Caco-2 (cell line): ENCODE measurements at regions of chr14 and their contacts with region 1.

Region 1: GRCh38 chr14:101039755-101040138 is 136.2 kb upstream of the RTL1 start:
- DNase-seq: no peak
- H3K4me3 ChIP-seq: no peak overlapping the region
- H3K4me3 Mint-ChIP-seq: no peak overlapping the region
- H3K27ac Mint-ChIP-seq: no peak overlapping the region
- H3K4me1 ChIP-seq: no peaks in the 10 kb centered on the region
- H3K4me1 Mint-ChIP-seq: no peaks in the 10 kb centered on the region
- H3K27me3 ChIP-seq: no peaks in the 10 kb centered on the region
- H3K27me3 Mint-ChIP-seq: no peaks in the 10 kb centered on the region
- CTCF ChIP-seq: no peak

Region 2: DNA sequence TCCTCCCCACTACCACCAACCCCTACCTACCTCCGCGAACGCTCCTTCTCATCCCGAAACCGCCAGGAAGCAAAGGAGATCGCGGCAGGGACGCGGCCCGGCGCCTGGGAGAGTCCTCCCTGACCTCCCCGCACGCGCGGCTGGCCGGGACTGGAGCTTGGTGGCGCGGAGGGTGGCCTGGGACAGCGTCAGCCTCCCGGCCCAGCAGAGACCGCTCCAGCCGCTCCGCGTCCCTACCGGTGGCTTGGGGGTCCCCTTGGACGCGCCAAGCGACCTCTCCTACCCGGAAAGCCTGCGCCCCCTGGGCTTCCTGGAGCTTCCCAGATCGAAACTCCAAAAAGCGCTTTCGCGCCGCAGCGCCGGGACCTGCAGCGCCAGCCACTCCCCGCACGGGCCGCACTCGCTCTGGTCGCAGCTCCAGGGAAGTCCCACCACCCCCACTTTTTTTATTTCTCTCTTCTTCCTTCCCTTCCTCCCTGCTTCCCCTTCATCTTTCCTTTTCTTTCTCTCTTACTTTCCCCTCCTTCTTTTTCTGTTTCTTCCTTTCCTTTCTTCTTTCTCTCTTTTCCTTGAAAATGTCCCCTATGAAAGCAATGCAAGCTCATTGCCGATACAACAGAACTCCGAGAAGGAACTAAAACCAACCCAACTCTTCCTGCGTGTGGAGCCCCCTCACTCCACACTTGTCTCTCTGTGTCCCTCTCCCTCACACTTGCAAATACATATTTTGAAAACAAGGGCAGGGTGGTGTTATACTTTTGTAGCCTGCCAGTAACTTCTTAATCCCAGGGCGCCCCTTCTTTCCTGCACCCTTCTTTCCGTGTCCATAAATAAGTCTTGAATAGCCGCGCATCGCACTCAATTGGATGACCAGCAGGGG is 525.3 kb after region 1 on chr14:
- CTCF ChIA-PET with region 1: interaction called, 13 read pairs
- POLR2A ChIA-PET with region 1: no interaction called
- intact Hi-C with region 1: no loop called
- DNase-seq: no peak
- H3K4me3 ChIP-seq: no peak overlapping the region
- H3K4me3 Mint-ChIP-seq: no peak overlapping the region
- H3K27ac Mint-ChIP-seq: no peak overlapping the region
- H3K4me1 ChIP-seq: 0 out of 2 replicates have a peak, but pooled peaks cover under 1% of the 10 kb centered on the region
- H3K4me1 Mint-ChIP-seq: no peaks in the 10 kb centered on the region
- H3K27me3 ChIP-seq: peaks cover 2% of the 10 kb centered on the region; the same call in 1 of the 2 replicates
- H3K27me3 Mint-ChIP-seq: peaks cover 26% of the 10 kb centered on the region
- CTCF ChIP-seq: no peak